Activated CD4-positive, alpha-beta memory T cell treated with anti-CD3 and anti-CD28 coated beads for 36 hours (primary cell): ENCODE measurements at regions of chr3 and their contacts with region 1.

Region 1: GRCh38 chr3:58874795-58875194 is 175.0 kb downstream of the CFAP20DC start:
- DNase-seq: peak; percentile 29
- H3K4me3 Mint-ChIP-seq: no peak overlapping the region
- H3K27ac Mint-ChIP-seq: peak overlapping the region; percentile 62
- H3K4me1 Mint-ChIP-seq: peaks cover 11% of the 10 kb centered on the region
- H3K27me3 Mint-ChIP-seq: peaks cover 13% of the 10 kb centered on the region

Region 2: GRCh38 chr3:58899159-58899952 is 24.6 kb after region 1 on chr3:
- CTCF ChIA-PET with region 1: no interaction called
- POLR2A ChIA-PET with region 1: no interaction called
- intact Hi-C with region 1: loop called (anchors 1 kb)
- DNase-seq: peak; percentile 62
- H3K4me3 Mint-ChIP-seq: no peak overlapping the region
- H3K27ac Mint-ChIP-seq: no peak overlapping the region
- H3K4me1 Mint-ChIP-seq: peaks cover 25% of the 10 kb centered on the region
- H3K27me3 Mint-ChIP-seq: no peaks in the 10 kb centered on the region